Posterior vena cava (tissue), 2 donors: ENCODE measurements at regions of chr4 and their contacts with region 1.

Region 1: GRCh38 chr4:56424697-56425514 is 10.5 kb downstream of the PPAT start:
- DNase-seq: no peak

Region 2: DNA sequence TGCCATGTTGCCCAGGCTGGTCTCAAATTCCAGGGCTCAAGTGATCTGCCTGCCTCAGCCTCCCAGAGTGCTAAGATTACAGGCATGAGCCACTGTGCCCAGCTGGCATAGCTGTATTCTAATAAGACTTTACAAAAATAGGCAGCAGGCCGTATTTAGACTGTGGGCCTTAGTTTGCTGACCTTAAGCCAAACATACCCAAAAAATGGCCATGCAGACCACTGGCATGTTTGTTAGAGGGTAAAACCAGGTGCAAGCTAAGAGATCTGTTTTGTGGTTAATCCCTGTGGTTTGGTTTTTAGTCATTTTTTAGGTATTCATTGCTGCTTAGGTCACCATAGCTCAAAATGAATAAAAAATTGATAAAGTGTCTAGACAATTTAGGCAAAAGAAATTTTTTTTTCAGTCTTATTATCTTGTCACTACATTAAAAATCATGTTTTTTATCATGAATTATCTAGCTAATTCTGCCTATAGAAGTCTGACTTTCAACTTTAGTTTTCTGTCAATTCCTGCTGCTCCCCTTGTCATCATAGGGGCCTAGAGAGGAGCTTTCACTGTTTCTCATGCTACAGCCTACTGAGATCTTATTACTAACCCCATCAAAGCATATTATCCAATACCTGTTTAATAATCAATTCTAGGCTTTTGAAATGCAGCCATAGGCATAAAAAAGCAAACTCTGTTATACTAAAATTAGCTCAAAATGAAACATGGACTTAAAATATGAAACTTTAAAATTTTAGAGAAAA is 404.1 kb after region 1 on chr4:
- intact Hi-C with region 1: loop called in 1 of 2 experiments (anchors 10 kb)
- DNase-seq: no peak